Activated CD8-positive, alpha-beta T cell treated with anti-CD3 and anti-CD28 coated beads, Interleukin-2, amount 10 ng/mL, durations not matched to agents 7 days and 5 days (primary cell): ENCODE measurements at regions of chr9 and their contacts with region 1.

Region 1: DNA sequence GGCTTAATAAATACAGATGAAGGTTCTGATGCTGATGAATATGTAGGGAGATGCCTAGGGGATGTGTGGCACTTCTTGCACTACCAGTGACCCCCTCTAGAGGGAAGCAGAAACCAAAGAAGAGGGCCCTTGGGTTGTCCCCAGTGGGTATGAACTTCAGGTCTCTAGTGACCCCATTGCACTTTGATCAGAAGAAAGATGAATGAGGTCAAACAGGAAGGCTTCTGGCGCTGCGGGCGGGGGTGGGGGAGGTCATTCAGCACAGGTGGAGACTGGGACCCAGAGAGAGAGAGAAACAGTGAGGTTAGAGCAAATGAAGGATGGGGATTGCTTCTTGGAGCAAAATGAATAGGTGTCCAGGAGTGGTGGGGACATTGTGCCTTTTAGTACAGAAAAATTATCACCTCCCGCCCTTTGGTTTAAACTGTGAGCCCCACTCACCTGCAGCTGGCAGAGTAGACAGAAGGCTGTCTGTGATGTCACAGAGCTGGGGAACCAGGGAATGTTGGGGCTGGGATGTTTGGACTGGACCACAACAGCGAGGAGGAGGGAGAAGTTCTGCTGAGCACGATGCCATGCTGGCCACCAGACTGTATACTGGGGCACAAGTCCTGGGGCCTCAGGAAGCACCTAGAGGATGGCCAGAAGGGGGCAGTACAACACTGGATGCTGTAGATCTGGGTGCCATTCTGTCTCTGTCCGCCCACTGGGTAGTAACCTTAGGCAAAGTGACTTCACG is at the start of gene TEX48:
- DNase-seq: peak; percentile 94
- ATAC-seq: peak; percentile 94
- H3K4me3 Mint-ChIP-seq: peak within 1 kb of the TSS; percentile 7
- H3K27ac Mint-ChIP-seq: peak within 1 kb of the TSS; percentile 85
- H3K4me1 Mint-ChIP-seq: peaks cover 71% of the 10 kb centered on the region
- H3K27me3 Mint-ChIP-seq: no peaks in the 10 kb centered on the region
- total RNA-seq, gene TEX48: 0.61 to 1.7 TPM

Region 2: GRCh38 chr9:114662081-114662989 is 19.4 kb before region 1 on chr9:
- CTCF ChIA-PET with region 1: interaction called, 17 read pairs
- POLR2A ChIA-PET with region 1: no interaction called
- DNase-seq: peak; percentile 82
- ATAC-seq: peak; percentile 93
- H3K4me3 Mint-ChIP-seq: no peak overlapping the region
- H3K27ac Mint-ChIP-seq: peak overlapping the region; percentile 9
- H3K4me1 Mint-ChIP-seq: peaks cover 8% of the 10 kb centered on the region
- H3K27me3 Mint-ChIP-seq: peaks cover 13% of the 10 kb centered on the region

Region 3: GRCh38 chr9:114718801-114719221 is 37.0 kb after region 1 on chr9:
- CTCF ChIA-PET with region 1: interaction called, 25 read pairs
- POLR2A ChIA-PET with region 1: interaction called, 4 read pairs
- DNase-seq: peak; percentile 98
- ATAC-seq: peak; percentile 95
- H3K4me3 Mint-ChIP-seq: peak overlapping the region; percentile 19
- H3K27ac Mint-ChIP-seq: peak overlapping the region; percentile 94
- H3K4me1 Mint-ChIP-seq: peaks cover 88% of the 10 kb centered on the region
- H3K27me3 Mint-ChIP-seq: no peaks in the 10 kb centered on the region

Region 4: DNA sequence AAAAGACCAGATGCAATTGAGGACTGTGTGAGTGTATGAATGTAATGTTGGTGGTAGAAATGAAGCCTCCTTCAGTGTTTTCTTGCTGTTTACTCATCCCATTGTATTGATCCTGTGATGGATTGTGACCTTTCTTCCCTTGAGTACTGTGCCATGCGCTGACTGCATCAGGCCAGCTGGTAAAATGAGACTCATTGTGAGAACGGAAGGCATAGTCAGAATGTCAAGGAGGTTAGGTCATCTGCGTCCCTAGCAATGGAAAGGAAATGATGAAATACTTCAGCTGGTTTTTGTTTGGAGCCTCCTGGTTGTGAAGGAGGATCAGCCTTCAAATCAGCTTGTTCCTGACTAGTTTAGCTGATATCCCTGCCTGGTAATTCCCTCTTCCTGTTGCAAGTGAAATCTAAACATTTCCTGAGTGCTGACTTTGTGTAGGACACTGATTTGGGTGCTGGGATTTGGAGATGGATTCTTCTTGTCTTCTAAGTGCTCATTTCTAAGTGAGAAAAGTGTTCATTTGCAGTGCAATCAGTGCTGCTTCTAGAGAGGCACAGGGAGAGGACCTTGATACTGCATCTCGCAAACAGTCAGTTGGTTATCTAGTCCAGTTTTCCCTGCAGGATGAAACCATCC is 213.2 kb after region 1 on chr9:
- CTCF ChIA-PET with region 1: interaction called, 50 read pairs
- POLR2A ChIA-PET with region 1: no interaction called
- DNase-seq: peak; percentile 59
- ATAC-seq: peak; percentile 22
- H3K4me3 Mint-ChIP-seq: no peak overlapping the region
- H3K27ac Mint-ChIP-seq: peak overlapping the region; percentile 79
- H3K4me1 Mint-ChIP-seq: peaks cover 52% of the 10 kb centered on the region
- H3K27me3 Mint-ChIP-seq: no peaks in the 10 kb centered on the region

Region 5: DNA sequence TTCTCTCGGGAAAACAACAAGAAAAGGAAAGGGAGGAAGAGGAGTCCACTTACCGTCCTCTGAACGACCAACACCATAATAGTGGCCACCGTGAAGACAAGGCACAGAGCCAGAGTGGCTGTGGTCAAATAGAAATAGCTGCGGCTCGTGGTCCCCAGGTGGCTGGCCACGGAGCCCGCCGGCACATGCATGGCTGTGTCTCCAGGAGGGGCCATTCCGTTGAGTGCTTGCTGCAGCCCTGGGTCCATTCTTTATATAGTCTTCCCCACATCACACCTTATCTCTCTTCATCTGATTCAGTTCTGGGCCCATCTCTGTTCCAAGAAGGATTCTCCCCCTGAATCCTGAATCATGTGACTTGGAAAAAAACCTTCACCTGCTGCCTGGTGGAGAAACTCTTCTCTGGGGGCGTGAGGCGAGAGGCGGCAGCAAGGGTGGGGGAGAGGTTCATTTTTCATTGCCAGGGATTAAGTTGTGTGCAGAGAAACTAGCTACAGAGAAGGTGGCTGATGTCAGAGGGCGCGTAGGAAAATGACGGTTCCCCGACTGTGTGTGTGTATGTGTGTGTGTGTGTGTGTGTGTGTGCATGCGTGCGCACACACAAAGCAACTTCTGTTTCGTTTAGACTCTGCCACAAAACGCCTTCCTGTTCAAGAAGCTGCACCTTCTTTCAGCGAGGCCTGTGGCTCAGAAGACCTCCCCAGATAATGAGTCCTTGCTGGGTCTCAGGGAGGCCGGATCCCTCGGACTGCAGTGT is 248.5 kb after region 1 on chr9 and contains the start of gene TNFSF8:
- CTCF ChIA-PET with region 1: interaction called, 59 read pairs
- POLR2A ChIA-PET with region 1: interaction called, 4 read pairs
- DNase-seq: peak; percentile 90
- ATAC-seq: peak; percentile 68
- H3K4me3 Mint-ChIP-seq: peak within 1 kb of the TSS; percentile 99
- H3K27ac Mint-ChIP-seq: peak within 1 kb of the TSS; percentile 99
- H3K4me1 Mint-ChIP-seq: peaks cover 54% of the 10 kb centered on the region
- H3K27me3 Mint-ChIP-seq: no peaks in the 10 kb centered on the region
- total RNA-seq, gene TNFSF8: 52.6 to 55.3 TPM

Region 6: DNA sequence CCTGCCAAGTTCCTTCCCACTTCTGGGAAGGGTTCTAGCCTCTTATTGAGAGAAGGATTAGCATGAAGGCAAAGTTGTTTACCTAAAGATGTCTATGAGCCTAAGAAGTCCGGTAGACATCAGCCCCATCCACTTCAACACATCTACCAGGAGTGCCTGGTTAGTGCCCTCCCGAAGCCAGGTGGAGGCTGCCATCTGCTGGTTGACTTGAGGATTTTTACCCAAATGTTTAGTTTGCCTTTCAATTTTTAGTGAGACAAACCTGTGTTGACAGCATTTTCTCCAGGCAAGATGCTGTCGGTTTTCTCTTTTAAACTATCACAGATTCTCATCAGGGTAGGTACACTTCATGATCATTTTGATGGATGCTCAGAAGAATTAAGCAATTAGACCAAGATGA is 332.2 kb after region 1 on chr9:
- CTCF ChIA-PET with region 1: interaction called, 145 read pairs
- POLR2A ChIA-PET with region 1: interaction called, 4 read pairs
- DNase-seq: peak; percentile 89
- ATAC-seq: peak; percentile 93
- H3K4me3 Mint-ChIP-seq: no peak overlapping the region
- H3K27ac Mint-ChIP-seq: peak overlapping the region; percentile 70
- H3K4me1 Mint-ChIP-seq: peaks cover 48% of the 10 kb centered on the region
- H3K27me3 Mint-ChIP-seq: no peaks in the 10 kb centered on the region